Activated CD4-positive, alpha-beta T cell treated with anti-CD3 and anti-CD28 coated beads, Interleukin-2, amount 10 ng/mL, durations not matched to agents 24 days and 14 days (primary cell): ENCODE measurements at regions of chr9 and their contacts with region 1.

Region 1: DNA sequence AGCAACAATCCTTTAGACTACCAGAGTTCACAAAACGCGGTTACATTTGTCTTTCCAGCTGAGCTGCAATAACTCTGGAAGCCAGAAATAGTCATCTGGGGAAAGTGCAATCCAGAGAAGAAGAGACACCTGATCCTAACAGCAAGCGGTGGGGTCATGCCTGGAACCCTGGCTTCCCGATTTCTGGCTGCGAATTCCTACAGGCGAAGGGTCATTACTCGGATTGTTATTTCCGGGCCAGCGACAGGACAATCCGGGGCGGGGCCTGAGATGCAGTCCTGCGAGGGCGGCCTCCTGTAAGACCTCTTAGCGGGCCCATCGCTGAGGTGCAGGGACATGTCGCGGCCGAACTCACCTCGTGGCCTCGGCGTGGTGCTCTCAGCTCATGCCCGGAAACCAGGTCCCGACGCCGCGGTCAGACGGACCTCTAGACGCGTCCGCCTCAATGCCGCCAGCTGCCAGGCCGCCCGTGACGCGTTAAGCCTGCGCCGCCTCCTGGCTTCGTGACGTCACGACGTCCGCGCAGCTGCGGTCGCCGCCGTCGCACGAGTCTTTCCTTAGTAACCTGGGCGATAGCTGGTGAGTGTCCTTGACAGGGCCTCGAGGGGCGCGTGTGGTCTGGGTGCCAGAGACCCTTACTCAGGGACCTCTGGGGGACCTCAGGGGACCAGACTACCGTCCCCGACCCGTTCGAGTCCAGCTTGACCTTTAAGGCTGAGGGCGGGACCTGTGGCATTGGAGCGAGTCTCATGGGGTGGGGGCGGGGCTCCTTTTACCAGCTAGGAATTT is at the starts of genes MRRF and RBM18:
- DNase-seq: peak; percentile 98
- H3K4me3 Mint-ChIP-seq: peak within 1 kb of the TSS; percentile 98
- H3K27ac Mint-ChIP-seq: peak within 1 kb of the TSS; percentile 100
- H3K4me1 Mint-ChIP-seq: peaks cover 39% of the 10 kb centered on the region
- H3K27me3 Mint-ChIP-seq: no peaks in the 10 kb centered on the region
- total RNA-seq, gene MRRF: 68.8 and 73.1 TPM in 2 replicates
- total RNA-seq, gene RBM18: 24.9 and 25.7 TPM in 2 replicates

Region 2: GRCh38 chr9:122218935-122219855 is 45.4 kb before region 1 on chr9:
- intact Hi-C with region 1: loop called (anchors 2 kb)
- DNase-seq: peak; percentile 70
- H3K4me3 Mint-ChIP-seq: peak overlapping the region; percentile 77
- H3K27ac Mint-ChIP-seq: no peak overlapping the region
- H3K4me1 Mint-ChIP-seq: peaks cover 25% of the 10 kb centered on the region
- H3K27me3 Mint-ChIP-seq: peaks cover 89% of the 10 kb centered on the region

Region 3: DNA sequence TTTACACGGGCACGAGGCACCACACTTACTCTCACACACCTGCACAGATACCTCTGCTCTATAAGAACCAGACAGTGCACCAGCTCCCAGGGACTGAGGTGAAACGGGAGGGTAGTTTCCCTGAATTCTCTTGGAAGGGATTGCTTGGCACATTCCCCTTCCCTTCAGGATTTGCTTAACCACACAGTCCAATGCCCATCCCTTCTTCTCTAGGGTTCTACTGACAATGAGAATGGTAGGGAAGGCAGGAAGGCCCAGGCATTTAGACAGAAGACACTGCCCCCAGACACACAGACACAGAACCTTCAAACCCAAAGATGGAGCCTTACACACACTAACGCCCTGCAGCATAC is 35.1 kb before region 1 on chr9:
- intact Hi-C with region 1: no loop called
- DNase-seq: no peak
- H3K4me3 Mint-ChIP-seq: no peak overlapping the region
- H3K27ac Mint-ChIP-seq: no peak overlapping the region
- H3K4me1 Mint-ChIP-seq: no peaks in the 10 kb centered on the region
- H3K27me3 Mint-ChIP-seq: peaks cover 28% of the 10 kb centered on the region